IMR-90 (cell line): ENCODE measurements at regions of chr11 and their contacts with region 1.

Region 1: DNA sequence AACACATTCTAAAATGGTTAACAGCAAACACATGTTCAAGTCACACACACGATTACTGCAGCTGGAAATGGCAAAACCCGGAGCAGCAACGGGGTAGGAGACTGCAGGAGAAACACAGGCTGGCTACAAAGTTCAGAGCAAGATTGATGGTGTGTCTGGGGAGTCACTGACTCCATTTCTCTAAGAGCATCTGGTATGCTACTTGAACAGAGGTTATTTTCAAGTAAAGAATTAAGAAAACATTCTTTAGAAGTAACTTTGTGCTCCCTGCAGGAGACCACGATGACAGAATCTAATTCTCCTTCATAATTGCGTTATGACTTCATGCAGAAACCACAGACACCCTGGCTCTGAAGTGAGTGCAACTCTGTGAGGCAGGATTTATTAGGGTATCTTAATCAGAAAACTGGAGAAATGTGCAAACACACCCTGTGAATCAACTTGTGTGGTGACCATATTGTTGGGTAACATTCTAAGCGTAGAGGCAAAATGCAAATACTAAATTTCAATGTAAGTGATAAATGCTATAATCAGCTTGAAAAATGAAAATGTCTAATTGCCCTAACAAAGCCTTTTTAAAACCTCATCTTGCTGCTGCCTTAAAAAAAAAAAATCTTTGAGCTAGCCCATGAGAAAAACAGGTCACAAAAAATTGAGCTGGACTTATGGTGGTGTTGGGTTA is 303.0 kb downstream of the CADM1 start:
- DNase-seq: peak; percentile 89
- ATAC-seq: peak; percentile 78
- H3K4me3 ChIP-seq: no peak overlapping the region
- H3K27ac ChIP-seq: peak overlapping the region; percentile 9
- H3K4me1 ChIP-seq: peaks cover 11% of the 10 kb centered on the region
- H3K27me3 ChIP-seq: no peaks in the 10 kb centered on the region
- CTCF ChIP-seq: no peak
- POLR2A ChIP-seq: no peak
- RAD21 ChIP-seq: no peak

Region 2: GRCh38 chr11:115616971-115617370 is 415.7 kb after region 1 on chr11:
- CTCF ChIA-PET with region 1: no interaction called
- POLR2A ChIA-PET with region 1: no interaction called
- dilution Hi-C with region 1: no loop called
- in situ Hi-C with region 1: no loop called
- intact Hi-C with region 1: loop called (anchors 10 kb)
- DNase-seq: peak; percentile 90
- ATAC-seq: peak; percentile 63
- H3K4me3 ChIP-seq: no peak overlapping the region
- H3K27ac ChIP-seq: no peak overlapping the region
- H3K4me1 ChIP-seq: peaks cover 18% of the 10 kb centered on the region
- H3K27me3 ChIP-seq: no peaks in the 10 kb centered on the region
- CTCF ChIP-seq: no peak
- POLR2A ChIP-seq: no peak
- RAD21 ChIP-seq: no peak